Colonic mucosa (tissue), 4 donors: ENCODE measurements at regions of chr1 and their contacts with region 1.

Region 1: GRCh38 chr1:9724706-9725476 is 73.4 kb downstream of the PIK3CD start:
- DNase-seq: peak; percentile 65
- H3K4me3 ChIP-seq: no peak overlapping the region
- H3K27ac ChIP-seq: no peak overlapping the region
- H3K4me1 ChIP-seq: no peaks in the 10 kb centered on the region
- H3K27me3 ChIP-seq: no peaks in the 10 kb centered on the region
- CTCF ChIP-seq: peak; percentile 85

Region 2: GRCh38 chr1:9629445-9630201 is 95.3 kb before region 1 on chr1:
- intact Hi-C with region 1: loop called (anchors 5 kb)
- DNase-seq: peak; percentile 50
- H3K4me3 ChIP-seq: peak overlapping the region; percentile 1
- H3K27ac ChIP-seq: peak overlapping the region; percentile 23
- H3K4me1 ChIP-seq: no peaks in the 10 kb centered on the region
- H3K27me3 ChIP-seq: no peaks in the 10 kb centered on the region
- CTCF ChIP-seq: no peak